ENCODE measurements at regions of chr1 and their contacts with region 1.

Region 1: DNA sequence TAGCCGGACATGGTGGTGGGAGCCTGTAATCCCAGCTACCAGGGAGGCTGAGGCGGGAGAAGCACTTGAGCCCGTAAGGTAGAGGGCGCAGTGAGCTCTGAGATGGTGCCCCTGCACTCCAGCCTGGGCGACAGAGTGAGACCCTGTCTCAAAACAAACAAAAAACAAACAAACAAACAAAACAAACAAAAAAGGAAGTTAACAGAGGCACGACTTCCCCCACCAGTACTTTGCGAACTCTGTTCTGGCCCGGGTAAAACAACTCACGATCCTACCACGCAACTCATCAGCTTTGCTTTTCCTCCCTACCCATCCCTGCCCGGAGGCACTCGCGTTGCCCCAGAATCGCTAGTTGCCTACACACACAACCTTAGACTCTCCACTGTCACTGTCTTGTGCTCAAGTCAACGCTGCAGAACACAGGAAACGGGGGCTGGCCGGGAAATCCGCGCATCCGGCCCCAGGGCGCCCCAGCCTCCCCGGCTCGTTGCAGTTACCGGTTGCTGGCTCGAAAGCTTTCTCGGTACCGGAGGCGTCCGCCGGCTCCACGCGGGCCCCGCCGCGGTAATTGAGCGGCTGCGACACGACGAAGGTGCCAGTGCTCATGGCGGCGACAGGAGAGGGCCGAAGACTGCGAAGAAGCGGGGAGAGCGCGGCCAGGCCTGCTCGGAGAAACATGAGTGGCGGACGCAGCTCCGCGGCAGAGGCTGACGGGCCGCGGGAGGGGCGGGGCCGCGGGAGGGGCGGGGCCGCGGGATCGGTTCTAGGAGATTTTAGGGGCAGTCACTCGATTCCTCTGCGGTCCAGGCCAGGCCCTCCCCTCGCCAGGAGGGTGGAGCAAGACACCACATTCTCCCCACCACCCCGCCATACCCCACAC is at the start of gene ALDH9A1:
- DNase-seq: peak; percentile 94 to 96
- ATAC-seq: peak; percentile 96
- H3K4me3 ChIP-seq: peak within 1 kb of the TSS; percentile 72 to 91
- H3K27ac ChIP-seq: peak within 1 kb of the TSS; percentile 72 to 73
- H3K4me1 ChIP-seq: no peaks in the 10 kb centered on the region
- H3K27me3 ChIP-seq: no peaks in the 10 kb centered on the region
- total RNA-seq, gene ALDH9A1: 36.5 to 54.3 TPM

Region 2: GRCh38 chr1:165898837-165899236 is 200.7 kb after region 1 on chr1:
- intact Hi-C with region 1: loop called in 1 of 2 experiments (anchors 5 kb)
- DNase-seq: peak; percentile 79 to 85
- ATAC-seq: peak; percentile 68
- H3K4me3 ChIP-seq: no peak overlapping the region
- H3K27ac ChIP-seq: peak overlapping the region; percentile 90 to 100
- H3K4me1 ChIP-seq: peaks cover 0 to 4% of the 10 kb centered on the region in 2 donors
- H3K27me3 ChIP-seq: no peaks in the 10 kb centered on the region